ENCODE measurements at regions of chr14 and their contacts with region 1.

Region 1: GRCh38 chr14:70640938-70641547 is 673 bp upstream of the TTC9 start:
- DNase-seq: peak; percentile 77
- ATAC-seq: peak; percentile 60
- H3K4me3 ChIP-seq: peak overlapping the region; percentile 43 to 89 (median 85)
- H3K4me3 Mint-ChIP-seq: peak overlapping the region; percentile 100
- H3K27ac ChIP-seq: peak overlapping the region; percentile 53 to 57
- H3K27ac Mint-ChIP-seq: peak overlapping the region; percentile 99
- H3K4me1 ChIP-seq: peaks cover 55 to 59% of the 10 kb centered on the region in 2 donors
- H3K4me1 Mint-ChIP-seq: peaks cover 70% of the 10 kb centered on the region
- H3K27me3 ChIP-seq: no peaks in the 10 kb centered on the region
- H3K27me3 Mint-ChIP-seq: no peaks in the 10 kb centered on the region
- CTCF ChIP-seq: no peak

Region 2: DNA sequence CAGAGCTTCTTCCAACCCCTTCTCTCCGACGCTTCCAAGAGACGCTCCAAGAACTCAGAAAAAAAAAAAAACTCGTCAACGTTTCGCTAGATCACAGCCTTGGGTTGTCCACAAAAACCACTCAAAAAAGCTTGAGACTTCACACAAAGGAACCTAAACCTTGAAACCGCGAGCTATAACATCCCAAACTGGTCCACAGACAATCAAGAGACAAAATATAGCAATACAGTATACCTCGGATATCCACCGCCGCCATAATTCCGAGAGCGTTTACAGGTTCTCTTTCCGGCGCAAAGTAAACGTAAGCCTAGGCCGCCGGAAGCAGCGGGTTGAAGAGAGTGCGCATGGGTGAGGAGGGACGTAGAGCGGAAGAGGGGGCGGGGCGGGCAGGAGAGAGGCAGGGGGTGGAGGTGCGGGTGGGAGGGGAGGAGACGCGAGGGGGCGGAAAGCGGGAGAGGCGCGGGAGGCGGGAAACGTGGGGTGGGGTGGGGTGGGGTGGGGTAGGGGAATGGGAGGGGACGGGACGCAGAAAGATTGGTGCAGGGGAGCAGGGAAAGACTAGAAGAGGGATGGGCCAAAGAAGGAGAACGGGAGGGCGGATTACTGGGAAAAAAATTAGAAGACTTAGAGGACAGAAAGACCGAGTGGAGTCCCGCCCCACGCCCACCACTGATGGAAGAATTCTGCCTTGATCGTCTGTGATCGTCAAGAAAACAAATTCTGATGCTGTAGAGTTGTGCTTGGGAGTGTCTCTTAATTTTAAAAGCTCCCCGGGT is 40.5 kb before region 1 on chr14 and contains the start of gene MED6:
- CTCF ChIA-PET with region 1: interaction called, 6 read pairs
- POLR2A ChIA-PET with region 1: interaction called, 3 read pairs
- intact Hi-C with region 1: loop called (anchors 5 kb)
- DNase-seq: peak; percentile 93
- ATAC-seq: peak; percentile 98
- H3K4me3 ChIP-seq: peak within 1 kb of the TSS; percentile 67 to 100 (median 98)
- H3K4me3 Mint-ChIP-seq: peak within 1 kb of the TSS; percentile 99
- H3K27ac ChIP-seq: peak within 1 kb of the TSS; percentile 69 to 94
- H3K27ac Mint-ChIP-seq: peak within 1 kb of the TSS; percentile 97
- H3K4me1 ChIP-seq: peaks cover 25 to 26% of the 10 kb centered on the region in 2 donors
- H3K4me1 Mint-ChIP-seq: peaks cover 27% of the 10 kb centered on the region
- H3K27me3 ChIP-seq: no peaks in the 10 kb centered on the region
- H3K27me3 Mint-ChIP-seq: no peaks in the 10 kb centered on the region
- CTCF ChIP-seq: no peak
- total RNA-seq, gene MED6: 68.3 and 71.0 TPM in 2 replicates

Region 3: DNA sequence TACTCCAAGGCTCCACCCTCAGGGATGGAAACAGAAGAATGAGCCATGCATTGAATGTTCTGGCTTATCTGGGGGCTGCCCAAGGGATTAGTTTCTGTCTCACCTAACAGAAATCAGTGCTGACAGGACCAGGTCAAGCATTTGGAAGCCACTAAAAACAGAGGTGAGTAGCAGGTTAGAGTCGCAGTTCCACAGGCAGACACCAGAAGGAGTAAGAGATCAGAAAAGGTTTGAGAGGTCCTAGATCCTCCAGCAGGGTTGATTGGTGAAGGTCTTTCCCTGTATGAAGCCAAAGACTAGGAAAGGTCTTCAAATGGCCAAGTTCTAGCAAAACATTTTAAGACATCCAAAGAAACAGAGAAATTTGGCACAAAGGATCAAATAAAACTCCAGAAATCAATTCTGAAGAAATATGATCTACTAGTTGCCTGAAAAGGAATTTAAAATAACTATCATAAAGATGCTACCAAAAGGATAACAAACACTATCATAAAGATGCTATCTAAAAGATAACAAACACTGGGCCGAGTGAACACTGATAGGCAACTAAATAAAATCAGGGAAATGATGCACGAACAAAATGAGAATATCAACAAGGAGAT is 18.8 kb before region 1 on chr14:
- CTCF ChIA-PET with region 1: interaction called, 4 read pairs
- POLR2A ChIA-PET with region 1: no interaction called
- intact Hi-C with region 1: loop called (anchors 1 kb)
- DNase-seq: peak; percentile 73
- ATAC-seq: peak; percentile 82
- H3K4me3 ChIP-seq: no peak overlapping the region
- H3K4me3 Mint-ChIP-seq: no peak overlapping the region
- H3K27ac ChIP-seq: no peak overlapping the region
- H3K27ac Mint-ChIP-seq: no peak overlapping the region
- H3K4me1 ChIP-seq: peaks cover 7 to 10% of the 10 kb centered on the region in 2 donors
- H3K4me1 Mint-ChIP-seq: peaks cover 22% of the 10 kb centered on the region
- H3K27me3 ChIP-seq: no peaks in the 10 kb centered on the region
- H3K27me3 Mint-ChIP-seq: no peaks in the 10 kb centered on the region
- CTCF ChIP-seq: peak; percentile 85

Region 4: DNA sequence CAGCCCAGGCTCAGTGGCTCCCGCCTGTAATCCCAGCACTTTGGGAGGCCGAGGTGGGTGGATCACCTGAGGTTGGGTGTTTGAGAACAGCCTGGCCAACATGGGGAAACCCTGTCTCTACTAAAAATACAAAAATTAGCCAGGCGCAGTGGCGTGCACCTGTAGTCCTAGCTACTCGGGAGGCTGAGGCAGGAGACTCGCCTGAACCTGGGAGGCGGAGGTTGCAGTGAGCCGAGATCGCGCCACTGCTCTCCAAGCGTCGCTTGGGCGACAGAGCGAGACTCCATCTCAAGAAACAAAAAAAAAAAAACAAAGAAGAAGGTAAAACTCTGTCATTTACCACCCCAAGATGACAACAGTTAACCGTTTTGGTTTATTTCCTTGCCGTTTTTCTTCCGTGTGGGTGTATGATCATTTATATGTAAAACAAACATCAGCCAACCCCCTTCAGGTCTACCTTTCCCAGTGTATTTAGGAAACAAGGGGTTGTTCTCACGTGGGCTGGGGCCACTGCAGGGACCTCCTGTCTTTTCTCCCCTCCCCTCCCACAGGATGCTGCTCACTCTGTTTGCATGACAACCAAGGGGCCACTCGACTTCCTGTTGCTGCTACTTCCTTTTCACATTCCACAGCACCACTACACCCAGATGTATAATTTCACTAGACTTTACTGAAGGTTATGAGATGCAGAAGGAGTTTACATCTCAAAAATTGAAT is 14.2 kb after region 1 on chr14:
- CTCF ChIA-PET with region 1: interaction called, 64 read pairs
- POLR2A ChIA-PET with region 1: interaction called, 48 read pairs
- intact Hi-C with region 1: loop called (anchors 1 kb)
- DNase-seq: peak; percentile 88
- ATAC-seq: peak; percentile 83
- H3K4me3 ChIP-seq: peak overlapping the region; percentile 6 to 53 (median 21)
- H3K4me3 Mint-ChIP-seq: peak overlapping the region; percentile 91
- H3K27ac ChIP-seq: peak overlapping the region; percentile 91 to 93
- H3K27ac Mint-ChIP-seq: peak overlapping the region; percentile 98
- H3K4me1 ChIP-seq: peaks cover 82 to 85% of the 10 kb centered on the region in 2 donors
- H3K4me1 Mint-ChIP-seq: peaks cover 83% of the 10 kb centered on the region
- H3K27me3 ChIP-seq: no peaks in the 10 kb centered on the region
- H3K27me3 Mint-ChIP-seq: no peaks in the 10 kb centered on the region
- CTCF ChIP-seq: no peak